ENCODE measurements at regions of chr7 and their contacts with region 1.

Region 1: DNA sequence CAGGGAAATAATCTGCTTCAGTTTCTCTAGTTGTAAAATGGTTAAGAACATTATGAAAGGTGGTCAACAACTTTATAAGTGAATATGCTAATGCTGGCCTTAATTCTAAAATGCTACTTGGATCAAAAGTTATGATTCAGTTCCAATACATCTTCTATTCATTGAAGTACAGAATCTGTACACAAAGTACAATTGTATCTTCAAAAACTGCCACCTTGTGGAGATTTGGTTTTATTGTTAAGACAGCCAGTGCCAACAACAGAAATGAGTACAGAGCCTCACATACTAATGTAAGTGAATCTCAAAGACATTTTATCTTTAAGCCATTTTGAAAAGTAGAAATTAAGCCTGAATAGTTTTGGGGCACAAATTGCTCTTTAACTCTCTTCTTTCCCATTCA is 194.0 kb downstream of the CFTR start:
- DNase-seq: no peak
- H3K4me3 ChIP-seq: peak overlapping the region in 53 of 59 donors; percentile 2 to 68 (median 38)
- H3K27ac ChIP-seq: peak overlapping the region in 54 of 59 donors; percentile 18 to 89 (median 72)
- H3K27me3 ChIP-seq: peaks cover 0 to 4% (median 0%) of the 10 kb centered on the region in 45 donors
- CTCF ChIP-seq: peak in 55 of 56 donors; percentile 21 to 71 (median 51)

Region 2: GRCh38 chr7:117458977-117459583 is 214.8 kb before region 1 on chr7:
- intact Hi-C with region 1: loop called in 1 of 2 experiments (anchors 5 kb)
- DNase-seq: no peak
- H3K4me3 ChIP-seq: no peak overlapping the region
- H3K27ac ChIP-seq: no peak overlapping the region
- H3K27me3 ChIP-seq: no peaks in the 10 kb centered on the region
- CTCF ChIP-seq: peak; percentile 57 to 92 (median 76)

Region 3: DNA sequence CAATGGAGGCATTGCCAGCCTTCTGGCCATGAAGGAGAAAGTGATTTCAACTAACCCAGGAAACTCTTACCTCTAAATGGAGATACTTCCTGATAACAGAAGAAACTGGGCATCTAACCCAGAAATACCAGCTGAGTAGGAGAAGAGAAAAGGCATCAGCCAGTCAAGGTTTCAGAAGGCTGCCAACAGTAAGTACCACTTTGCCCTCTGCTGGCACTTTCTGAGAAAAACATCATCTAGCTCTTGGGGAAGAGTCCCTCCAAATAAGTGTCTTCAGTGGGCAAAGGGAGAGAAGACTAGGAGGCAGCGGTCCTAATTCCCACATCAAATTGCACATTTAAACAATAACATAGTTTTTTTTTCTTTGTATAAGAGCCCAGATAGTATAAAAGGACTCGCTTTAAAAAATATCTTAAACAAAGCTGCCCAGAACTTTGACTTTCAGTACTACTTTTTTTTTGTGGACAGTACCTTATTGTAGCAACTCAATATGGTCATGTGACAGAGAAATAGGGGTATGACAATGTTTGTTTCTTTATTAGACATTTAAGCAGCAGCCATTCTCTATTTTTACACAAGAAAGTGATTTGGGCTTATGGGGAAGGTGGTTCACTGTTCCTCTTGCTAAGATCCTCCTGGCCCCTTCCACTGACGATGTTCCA is 42.1 kb after region 1 on chr7:
- intact Hi-C with region 1: loop called (anchors 5 kb)
- DNase-seq: peak in 4 of 10 donors; percentile 19 to 51 (median 34)
- H3K4me3 ChIP-seq: no peak overlapping the region
- H3K27ac ChIP-seq: peak overlapping the region in 34 of 59 donors; percentile 0 to 73 (median 44)
- H3K27me3 ChIP-seq: no peaks in the 10 kb centered on the region
- CTCF ChIP-seq: peak in 54 of 56 donors; percentile 49 to 83 (median 68)

Region 4: DNA sequence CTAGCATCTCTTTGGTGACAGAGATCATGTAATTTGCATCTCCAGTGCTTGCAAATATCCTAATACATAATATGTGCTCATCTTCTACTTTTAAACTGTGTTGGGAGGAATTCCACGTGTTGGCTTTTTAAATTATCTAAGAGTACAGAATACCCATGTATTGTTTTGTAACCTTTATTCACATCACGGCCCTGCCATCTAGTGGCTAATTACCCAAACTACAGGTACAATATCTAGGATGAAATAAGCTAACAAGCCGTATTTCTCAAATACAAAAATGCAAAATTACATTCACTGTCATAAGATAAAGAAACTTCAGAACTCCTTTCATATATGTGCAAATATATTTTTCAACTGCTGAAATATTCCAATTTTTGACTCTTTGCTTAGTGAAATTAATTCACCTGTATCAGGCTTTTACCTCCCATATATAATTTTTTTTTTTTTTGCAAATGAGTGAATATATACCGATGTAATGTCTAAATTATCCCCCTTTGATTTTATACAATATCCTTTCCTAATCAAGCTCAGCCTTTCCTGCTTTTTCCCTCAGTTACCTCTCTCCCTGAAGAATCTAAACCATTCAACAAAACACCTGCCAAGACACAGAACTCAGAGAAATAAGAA is 479.8 kb after region 1 on chr7:
- intact Hi-C with region 1: loop called in 1 of 2 experiments (anchors 5 kb)
- DNase-seq: no peak
- H3K4me3 ChIP-seq: no peak overlapping the region
- H3K27ac ChIP-seq: no peak overlapping the region
- H3K27me3 ChIP-seq: no peaks in the 10 kb centered on the region
- CTCF ChIP-seq: peak; percentile 45 to 81 (median 68)